Mammary epithelial cell (primary cell): ENCODE measurements at regions of chr13 and their contacts with region 1.

Region 1: DNA sequence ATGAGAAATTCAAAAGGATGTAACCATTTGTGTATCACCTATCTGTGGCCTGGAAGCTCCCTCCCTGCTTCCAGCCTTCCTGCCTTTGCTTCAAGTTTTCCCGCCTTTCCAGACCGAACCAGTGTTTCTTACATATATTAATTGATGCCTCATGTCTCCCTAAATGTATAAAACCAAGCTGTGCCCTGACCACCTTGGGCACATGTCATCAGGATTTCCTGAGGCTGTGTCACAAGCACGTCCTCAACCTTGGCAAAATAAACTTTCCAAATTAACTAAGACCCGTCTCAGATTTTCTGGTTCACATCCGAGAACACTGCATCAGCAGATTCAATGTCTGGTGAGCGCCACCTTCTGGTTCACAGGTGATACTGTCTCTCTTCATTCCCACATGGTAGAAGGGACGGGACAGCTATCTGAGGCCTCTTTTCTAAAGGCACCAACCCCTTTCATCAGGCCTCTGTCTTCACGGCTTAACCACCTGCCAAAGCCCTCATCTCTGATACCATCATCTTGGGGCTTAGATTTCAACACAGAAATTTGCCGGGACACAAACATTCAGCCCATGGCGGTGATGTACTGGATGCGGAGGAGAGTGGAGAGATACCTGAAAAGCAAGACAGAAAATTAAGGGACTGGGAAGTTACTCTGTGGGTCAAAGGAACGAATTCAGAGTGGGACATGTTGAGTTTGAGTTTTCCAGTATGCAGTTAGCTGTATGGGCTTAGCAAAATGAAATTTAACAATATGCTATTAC is 58.7 kb upstream of the PABPC3 start:
- DNase-seq: peak; percentile 44
- H3K4me3 ChIP-seq: no peak overlapping the region
- H3K27ac ChIP-seq: no peak overlapping the region
- H3K4me1 ChIP-seq: no peaks in the 10 kb centered on the region
- H3K27me3 ChIP-seq: no peaks in the 10 kb centered on the region
- CTCF ChIP-seq: peak; percentile 78 to 84

Region 2: GRCh38 chr13:24995226-24995804 is 41.9 kb before region 1 on chr13:
- CTCF ChIA-PET with region 1: interaction called, 3 read pairs
- dilution Hi-C with region 1: no loop called
- in situ Hi-C with region 1: no loop called
- intact Hi-C with region 1: loop called (anchors 1 kb)
- DNase-seq: peak; percentile 66
- H3K4me3 ChIP-seq: no peak overlapping the region
- H3K27ac ChIP-seq: no peak overlapping the region
- H3K4me1 ChIP-seq: no peaks in the 10 kb centered on the region
- H3K27me3 ChIP-seq: peaks cover 3% of the 10 kb centered on the region
- CTCF ChIP-seq: peak; percentile 83 to 86

Region 3: GRCh38 chr13:25001476-25002206 is 35.6 kb before region 1 on chr13:
- CTCF ChIA-PET with region 1: no interaction called
- dilution Hi-C with region 1: no loop called
- in situ Hi-C with region 1: no loop called
- intact Hi-C with region 1: loop called (anchors 1 kb)
- DNase-seq: no peak
- H3K4me3 ChIP-seq: no peak overlapping the region
- H3K27ac ChIP-seq: no peak overlapping the region
- H3K4me1 ChIP-seq: peaks cover 11% of the 10 kb centered on the region
- H3K27me3 ChIP-seq: no peaks in the 10 kb centered on the region
- CTCF ChIP-seq: no peak

Region 4: DNA sequence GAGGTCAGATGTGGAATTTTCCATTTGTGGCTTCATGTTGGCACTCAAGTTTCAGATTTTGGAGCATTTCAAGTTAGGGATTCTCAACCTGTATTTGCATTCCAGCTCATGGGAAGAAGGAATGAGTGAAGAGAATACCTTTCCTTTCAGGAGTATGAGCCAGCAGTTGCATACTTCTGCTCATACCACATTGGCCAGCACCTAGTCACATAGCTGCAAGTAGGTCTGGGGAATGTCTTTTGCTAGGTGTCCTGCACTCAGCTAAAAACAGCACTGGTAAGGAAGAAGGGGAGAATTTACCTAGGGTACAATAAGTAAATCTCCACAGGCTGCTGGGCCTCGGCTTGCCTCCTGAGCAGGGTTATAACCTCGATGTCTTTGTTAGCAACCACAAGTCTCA is 309.9 kb after region 1 on chr13:
- CTCF ChIA-PET with region 1: no interaction called
- dilution Hi-C with region 1: no loop called
- in situ Hi-C with region 1: no loop called
- intact Hi-C with region 1: no loop called
- DNase-seq: no peak
- H3K4me3 ChIP-seq: no peak overlapping the region
- H3K27ac ChIP-seq: no peak overlapping the region
- H3K4me1 ChIP-seq: no peaks in the 10 kb centered on the region
- H3K27me3 ChIP-seq: no peaks in the 10 kb centered on the region
- CTCF ChIP-seq: no peak